Prostate gland (tissue), 2 donors: ENCODE measurements at regions of chr2 and their contacts with region 1.

Region 1: DNA sequence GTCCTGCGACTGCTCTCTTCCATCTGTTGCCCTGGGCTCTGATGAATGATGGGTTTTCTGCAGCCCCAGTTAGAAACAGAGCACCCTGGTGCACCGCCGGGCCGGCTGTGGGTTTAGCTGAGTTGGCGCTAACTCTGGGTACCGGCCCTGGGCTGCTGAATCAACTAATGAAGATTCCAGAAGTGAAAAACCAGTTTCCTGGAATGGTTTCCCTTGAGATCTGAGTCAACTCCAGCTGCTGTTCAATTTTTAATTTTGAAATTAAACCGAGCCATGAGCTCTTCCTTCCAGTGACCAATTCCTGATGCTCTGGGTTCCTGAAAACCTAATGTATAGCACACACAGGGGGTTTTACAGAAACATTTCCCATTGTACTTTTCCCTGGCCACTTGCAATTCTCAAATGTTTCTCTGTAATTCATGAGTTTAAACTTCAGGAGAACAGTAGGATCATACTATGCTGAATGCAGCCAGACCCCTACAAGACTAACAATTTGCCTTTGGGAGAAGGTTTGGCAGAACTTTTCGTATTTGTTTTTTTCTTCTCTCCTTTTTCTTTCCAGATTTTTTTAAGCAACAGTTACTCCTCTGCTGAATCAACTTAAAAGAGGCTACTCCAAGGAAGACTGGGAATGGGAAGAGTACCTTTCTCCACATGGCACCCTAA is 5.5 kb downstream of the COL6A3 start:
- DNase-seq: no peak
- H3K4me3 ChIP-seq: no peak overlapping the region
- H3K27ac ChIP-seq: peak overlapping the region; percentile 48 to 73
- H3K4me1 ChIP-seq: no peaks in the 10 kb centered on the region
- H3K27me3 ChIP-seq: no peaks in the 10 kb centered on the region
- CTCF ChIP-seq: no peak
- POLR2A ChIP-seq: no peak

Region 2: GRCh38 chr2:237315170-237315828 is 93.2 kb before region 1 on chr2:
- intact Hi-C with region 1: loop called (anchors 5 kb)
- DNase-seq: peak; percentile 84
- H3K4me3 ChIP-seq: no peak overlapping the region
- H3K27ac ChIP-seq: peak overlapping the region; percentile 82 to 83
- H3K4me1 ChIP-seq: no peaks in the 10 kb centered on the region
- H3K27me3 ChIP-seq: no peaks in the 10 kb centered on the region
- CTCF ChIP-seq: peak in 3 of 4 experiments; percentile 21 to 67 (median 46)
- POLR2A ChIP-seq: no peak

Region 3: GRCh38 chr2:237354892-237355291 is 53.6 kb before region 1 on chr2:
- intact Hi-C with region 1: loop called (anchors 5 kb)
- DNase-seq: no peak
- H3K4me3 ChIP-seq: no peak overlapping the region
- H3K27ac ChIP-seq: peak overlapping the region; percentile 13 to 33
- H3K4me1 ChIP-seq: no peaks in the 10 kb centered on the region
- H3K27me3 ChIP-seq: no peaks in the 10 kb centered on the region
- CTCF ChIP-seq: no peak
- POLR2A ChIP-seq: no peak